PC-3 (cell line): ENCODE measurements at regions of chr2 and their contacts with region 1.

Region 1: GRCh38 chr2:148509288-148509902 is 135.2 kb upstream of the EPC2 start:
- DNase-seq: peak; percentile 90
- ATAC-seq: peak; percentile 100
- H3K4me3 ChIP-seq: peak overlapping the region; percentile 65
- H3K27ac ChIP-seq: no peak overlapping the region
- H3K4me1 ChIP-seq: peaks cover 5% of the 10 kb centered on the region; the same call in 1 of the 2 replicates
- H3K27me3 ChIP-seq: no peaks in the 10 kb centered on the region
- CTCF ChIP-seq: peak; percentile 94

Region 2: DNA sequence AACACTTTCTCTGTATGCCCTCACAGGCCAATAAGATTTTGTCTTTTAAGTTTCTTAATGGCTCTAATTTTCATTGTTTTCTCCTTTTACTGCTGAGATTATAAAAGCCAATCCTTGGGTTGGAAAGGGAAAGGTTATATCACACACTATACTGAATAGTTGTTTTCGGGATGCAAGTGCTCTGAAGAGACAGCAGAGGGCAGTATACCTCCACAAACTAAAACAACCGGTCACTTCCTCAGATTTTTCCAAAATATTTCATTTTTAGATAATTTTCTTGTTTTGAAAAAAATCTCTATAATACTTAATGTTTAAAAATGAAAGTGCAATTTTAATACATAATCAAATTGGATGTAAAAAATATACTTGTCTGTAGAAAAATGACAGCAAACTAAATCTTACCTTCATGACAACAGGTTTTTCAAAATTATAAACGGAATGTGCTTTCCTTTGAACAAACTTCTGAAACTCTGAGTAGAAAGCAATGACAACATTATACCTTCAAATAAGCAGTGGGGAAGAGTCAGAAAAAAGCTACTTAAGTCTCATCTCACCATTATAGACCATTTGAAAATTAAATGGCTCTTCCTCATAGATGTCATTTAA is 571.5 kb before region 1 on chr2:
- CTCF ChIA-PET with region 1: interaction called, 9 read pairs
- POLR2A ChIA-PET with region 1: no interaction called
- intact Hi-C with region 1: loop called (anchors 1 kb)
- DNase-seq: peak; percentile 56
- ATAC-seq: no peak
- H3K4me3 ChIP-seq: no peak overlapping the region
- H3K27ac ChIP-seq: no peak overlapping the region
- H3K4me1 ChIP-seq: no peaks in the 10 kb centered on the region
- H3K27me3 ChIP-seq: no peaks in the 10 kb centered on the region
- CTCF ChIP-seq: peak; percentile 87

Region 3: DNA sequence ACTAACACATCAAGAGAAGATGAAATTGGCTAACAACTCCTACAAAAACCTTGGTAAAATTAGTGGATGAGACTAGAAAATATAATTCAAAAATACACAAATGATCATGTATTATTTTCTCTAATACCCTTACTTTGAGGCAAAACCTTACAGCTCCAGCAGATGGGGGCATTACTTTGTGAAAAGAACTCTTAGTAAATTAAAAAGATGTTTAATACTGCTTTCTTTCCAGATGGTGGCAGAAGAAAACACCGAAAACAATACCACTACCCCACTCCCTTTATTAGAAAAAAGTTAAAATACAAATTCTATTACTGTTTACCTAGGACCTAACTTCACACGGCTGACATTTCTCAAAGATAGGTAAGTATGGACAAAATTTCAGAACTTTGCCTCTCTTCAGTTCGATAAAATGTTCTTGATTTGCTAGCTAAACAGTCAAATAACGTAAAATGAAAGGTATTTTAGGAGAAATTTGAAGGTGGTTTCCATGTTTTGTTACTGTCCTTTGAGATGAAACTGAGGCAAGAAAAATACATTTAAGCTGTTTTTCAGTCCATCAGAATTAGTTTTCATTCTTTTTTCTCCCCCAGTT is 519.5 kb before region 1 on chr2:
- CTCF ChIA-PET with region 1: interaction called, 12 read pairs
- POLR2A ChIA-PET with region 1: no interaction called
- intact Hi-C with region 1: loop called (anchors 1 kb)
- DNase-seq: peak; percentile 66
- ATAC-seq: peak; percentile 70
- H3K4me3 ChIP-seq: no peak overlapping the region
- H3K27ac ChIP-seq: no peak overlapping the region
- H3K4me1 ChIP-seq: no peaks in the 10 kb centered on the region
- H3K27me3 ChIP-seq: no peaks in the 10 kb centered on the region
- CTCF ChIP-seq: peak; percentile 93

Region 4: GRCh38 chr2:148172131-148172753 is 337.2 kb before region 1 on chr2:
- CTCF ChIA-PET with region 1: interaction called, 10 read pairs
- POLR2A ChIA-PET with region 1: no interaction called
- intact Hi-C with region 1: no loop called
- DNase-seq: no peak
- ATAC-seq: no peak
- H3K4me3 ChIP-seq: no peak overlapping the region
- H3K27ac ChIP-seq: no peak overlapping the region
- H3K4me1 ChIP-seq: no peaks in the 10 kb centered on the region
- H3K27me3 ChIP-seq: no peaks in the 10 kb centered on the region
- CTCF ChIP-seq: no peak

Region 5: GRCh38 chr2:148209603-148210002 is 299.8 kb before region 1 on chr2:
- CTCF ChIA-PET with region 1: no interaction called
- POLR2A ChIA-PET with region 1: interaction called, 3 read pairs
- intact Hi-C with region 1: loop called (anchors 10 kb)
- DNase-seq: peak; percentile 21
- ATAC-seq: no peak
- H3K4me3 ChIP-seq: no peak overlapping the region
- H3K27ac ChIP-seq: no peak overlapping the region
- H3K4me1 ChIP-seq: no peaks in the 10 kb centered on the region
- H3K27me3 ChIP-seq: no peaks in the 10 kb centered on the region
- CTCF ChIP-seq: no peak

Region 6: DNA sequence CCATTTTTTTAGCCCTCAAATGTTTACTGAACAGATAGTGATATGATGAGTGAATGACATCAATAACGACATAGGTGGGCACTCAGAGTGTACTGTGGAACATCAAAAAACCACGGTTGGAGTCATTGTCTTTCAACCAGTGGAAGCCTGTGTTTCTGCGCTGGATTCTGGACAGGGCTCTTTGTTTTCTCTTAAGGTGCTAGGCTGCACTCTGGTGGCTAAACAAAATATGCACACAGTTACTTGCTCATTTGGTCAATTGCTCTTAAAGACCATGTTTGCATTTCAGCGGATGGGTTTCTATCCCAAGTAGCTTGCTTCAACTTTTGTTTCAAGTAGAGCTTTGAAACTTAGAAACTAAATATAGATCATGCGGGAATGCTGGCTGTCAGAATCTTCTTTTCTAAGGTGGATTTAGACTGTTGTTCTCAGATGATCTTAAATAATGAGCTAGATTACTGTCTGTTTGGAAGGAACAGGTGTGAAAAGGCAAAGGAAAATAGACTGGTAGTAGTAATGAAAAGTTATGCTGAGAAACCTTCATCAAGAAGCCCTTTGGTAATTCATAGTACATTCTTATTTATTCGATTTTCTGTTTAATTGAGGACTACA is 480.6 kb after region 1 on chr2:
- CTCF ChIA-PET with region 1: no interaction called
- POLR2A ChIA-PET with region 1: no interaction called
- intact Hi-C with region 1: loop called (anchors 5 kb)
- DNase-seq: peak; percentile 87
- ATAC-seq: peak; percentile 92
- H3K4me3 ChIP-seq: no peak overlapping the region
- H3K27ac ChIP-seq: no peak overlapping the region
- H3K4me1 ChIP-seq: no peaks in the 10 kb centered on the region
- H3K27me3 ChIP-seq: no peaks in the 10 kb centered on the region
- CTCF ChIP-seq: peak; percentile 87